Astrocyte of the cerebellum (primary cell): ENCODE measurements at regions of chr6 and their contacts with region 1.

Region 1: GRCh38 chr6:1179571-1180459 is 132.1 kb upstream of the FOXQ1 start:
- DNase-seq: no peak
- H3K4me3 ChIP-seq: no peak overlapping the region
- CTCF ChIP-seq: no peak

Region 2: DNA sequence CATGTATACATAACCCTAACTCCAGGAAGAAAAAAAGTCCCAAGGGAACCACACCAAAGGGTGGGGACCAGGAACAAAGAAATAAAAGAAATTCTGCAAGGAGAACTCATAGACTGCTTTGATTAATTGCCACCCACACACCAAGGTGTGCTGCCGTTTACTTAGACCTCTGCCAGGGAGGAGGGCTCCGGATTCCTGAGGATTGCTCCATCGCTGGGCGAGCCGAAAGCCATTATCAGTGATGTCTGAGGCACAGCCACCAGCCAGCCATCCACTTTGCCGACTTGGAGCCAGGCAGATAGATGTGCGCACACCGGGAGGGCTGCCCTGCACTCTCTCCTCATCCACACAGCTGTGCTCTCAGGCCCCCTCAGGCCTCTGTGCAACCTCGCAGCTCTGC is 140.6 kb before region 1 on chr6:
- in situ Hi-C with region 1: loop called (anchors 10 kb)
- DNase-seq: no peak
- H3K4me3 ChIP-seq: no peak overlapping the region
- CTCF ChIP-seq: no peak